Heart right ventricle (tissue), 16 donors: ENCODE measurements at regions of chr12 and their contacts with region 1.

Region 1: GRCh38 chr12:104108755-104109445 is 29.1 kb downstream of the NFYB start:
- DNase-seq: peak; percentile 69 to 75
- ATAC-seq: peak; percentile 43 to 86 (median 74)
- H3K4me3 ChIP-seq: no peak overlapping the region
- H3K27ac ChIP-seq: no peak overlapping the region
- H3K4me1 ChIP-seq: peaks cover 0 to 26% (median 12%) of the 10 kb centered on the region in 9 donors
- H3K27me3 ChIP-seq: no peaks in the 10 kb centered on the region
- CTCF ChIP-seq: peak; percentile 58 to 93 (median 87)

Region 2: DNA sequence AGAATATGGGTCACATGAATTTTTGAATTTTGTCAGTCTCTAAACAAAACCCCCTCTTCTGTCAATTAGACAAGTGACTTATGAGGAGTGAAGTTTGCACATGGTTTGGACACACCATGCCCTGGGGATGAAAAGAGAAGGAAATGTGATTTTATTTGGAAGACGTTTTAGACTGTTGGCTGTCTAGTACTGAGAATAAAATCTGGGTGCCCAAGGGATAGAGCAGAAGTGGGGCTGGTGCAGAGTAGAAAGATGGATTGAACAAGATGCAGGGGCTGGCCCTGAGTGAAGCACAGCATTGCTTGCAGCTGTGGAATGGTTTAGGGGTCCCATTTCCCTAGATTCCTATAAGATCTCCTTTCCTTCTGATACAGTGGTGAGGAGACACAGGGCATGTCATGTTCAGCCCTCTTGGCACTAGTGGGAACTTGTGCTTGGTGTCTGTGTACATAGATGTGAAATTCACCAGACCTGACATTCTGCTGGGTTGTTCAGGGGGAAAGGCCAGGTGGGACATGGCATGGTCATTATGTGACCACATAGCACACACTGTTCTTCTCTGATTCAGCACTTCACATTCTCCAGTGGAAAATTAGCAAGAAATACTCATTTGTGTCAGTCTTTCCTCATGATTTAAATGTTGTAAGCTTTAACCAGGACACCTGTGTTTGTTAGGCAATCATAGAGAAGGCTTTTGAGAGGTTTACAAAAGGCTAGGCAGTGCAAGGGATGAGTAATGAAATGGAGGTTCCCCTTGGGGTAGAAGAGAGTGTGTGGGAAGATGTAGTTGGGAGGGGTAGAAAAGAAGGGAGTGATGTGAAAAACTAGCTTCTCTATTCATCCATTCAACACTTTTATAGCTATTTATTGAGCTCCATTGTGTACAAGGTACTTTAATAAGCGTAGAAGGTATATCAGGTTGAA is 1426.3 kb before region 1 on chr12:
- intact Hi-C with region 1: no loop called
- DNase-seq: no peak
- ATAC-seq: peak in 5 of 8 donors; percentile 29 to 62 (median 50)
- H3K4me3 ChIP-seq: no peak overlapping the region
- H3K27ac ChIP-seq: no peak overlapping the region
- H3K4me1 ChIP-seq: peaks cover 0 to 7% (median 0%) of the 10 kb centered on the region in 9 donors
- H3K27me3 ChIP-seq: no peaks in the 10 kb centered on the region
- CTCF ChIP-seq: no peak

Region 3: DNA sequence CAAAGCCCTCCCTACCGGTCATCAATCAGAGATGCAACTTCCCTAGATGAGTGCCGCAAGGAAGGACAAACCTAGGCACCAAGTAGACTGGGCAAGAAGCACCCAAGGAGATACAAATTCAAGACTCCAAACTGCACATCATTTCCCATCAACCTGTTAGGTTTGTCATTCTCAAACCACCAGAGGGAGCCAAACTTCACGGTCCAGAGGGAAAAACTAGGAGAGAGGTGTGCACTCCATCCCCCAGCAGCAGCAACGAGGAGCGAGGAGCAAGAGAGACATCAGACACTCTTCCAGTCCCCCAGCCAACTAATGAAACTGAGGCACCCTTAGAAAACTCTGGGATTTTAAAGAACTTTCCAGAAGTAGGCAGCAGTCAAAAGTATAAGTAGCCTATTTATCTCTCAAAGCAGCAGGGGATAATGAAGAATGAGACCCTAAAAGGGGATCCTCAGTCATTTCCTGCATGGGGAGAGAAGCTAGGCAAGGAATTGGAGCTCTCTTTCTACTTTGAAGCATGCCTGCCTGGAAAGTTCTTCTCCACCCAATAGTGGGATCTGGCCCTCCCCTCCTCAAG is 230.9 kb before region 1 on chr12:
- intact Hi-C with region 1: loop called in 8 of 10 experiments (anchors 1 to 10 kb)
- DNase-seq: peak in 1 of 2 donors; percentile 57
- ATAC-seq: peak in 7 of 8 donors; percentile 73 to 86 (median 75)
- H3K4me3 ChIP-seq: no peak overlapping the region
- H3K27ac ChIP-seq: no peak overlapping the region
- H3K4me1 ChIP-seq: no peaks in the 10 kb centered on the region
- H3K27me3 ChIP-seq: no peaks in the 10 kb centered on the region
- CTCF ChIP-seq: peak; percentile 51 to 76 (median 74)

Region 4: DNA sequence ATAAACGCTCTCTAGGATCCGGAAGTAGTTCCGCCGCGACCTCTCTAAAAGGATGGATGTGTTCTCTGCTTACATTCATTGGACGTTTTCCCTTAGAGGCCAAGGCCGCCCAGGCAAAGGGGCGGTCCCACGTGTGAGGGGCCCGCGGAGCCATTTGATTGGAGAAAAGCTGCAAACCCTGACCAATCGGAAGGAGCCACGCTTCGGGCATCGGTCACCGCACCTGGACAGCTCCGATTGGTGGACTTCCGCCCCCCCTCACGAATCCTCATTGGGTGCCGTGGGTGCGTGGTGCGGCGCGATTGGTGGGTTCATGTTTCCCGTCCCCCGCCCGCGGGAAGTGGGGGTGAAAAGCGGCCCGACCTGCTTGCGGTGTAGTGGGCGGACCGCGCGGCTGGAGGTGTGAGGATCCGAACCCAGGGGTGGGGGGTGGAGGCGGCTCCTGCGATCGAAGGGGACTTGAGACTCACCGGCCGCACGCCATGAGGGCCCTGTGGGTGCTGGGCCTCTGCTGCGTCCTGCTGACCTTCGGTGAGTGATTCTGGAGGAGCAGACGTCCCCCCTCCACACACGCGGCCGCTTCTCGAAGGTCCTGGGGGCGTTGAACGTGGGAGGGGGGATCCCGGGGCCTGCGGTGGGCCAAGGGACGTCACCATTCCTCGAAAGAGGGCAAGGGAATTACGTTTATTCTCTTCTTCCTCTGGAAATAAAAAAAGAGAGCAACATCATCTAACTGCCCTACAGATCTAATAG is 178.7 kb before region 1 on chr12 and contains the start of gene HSP90B1:
- intact Hi-C with region 1: loop called in 1 of 10 experiments (anchors 5 kb)
- DNase-seq: peak; percentile 98 to 100
- ATAC-seq: peak; percentile 91 to 95 (median 94)
- H3K4me3 ChIP-seq: peak within 1 kb of the TSS; percentile 61 to 95 (median 78)
- H3K27ac ChIP-seq: peak within 1 kb of the TSS; percentile 88 to 98 (median 94)
- H3K4me1 ChIP-seq: peaks cover 5 to 61% (median 50%) of the 10 kb centered on the region in 9 donors
- H3K27me3 ChIP-seq: no peaks in the 10 kb centered on the region
- CTCF ChIP-seq: no peak
- total RNA-seq, gene HSP90B1: 235 to 487 (median 297) TPM

Region 5: GRCh38 chr12:103956516-103957027 is 152.3 kb before region 1 on chr12:
- intact Hi-C with region 1: loop called in 2 of 10 experiments (anchors 10 kb)
- DNase-seq: no peak
- ATAC-seq: peak; percentile 35 to 79 (median 55)
- H3K4me3 ChIP-seq: peak overlapping the region; percentile 68 to 97 (median 88)
- H3K27ac ChIP-seq: peak overlapping the region; percentile 86 to 97 (median 95)
- H3K4me1 ChIP-seq: peaks cover 3 to 36% (median 21%) of the 10 kb centered on the region in 9 donors
- H3K27me3 ChIP-seq: no peaks in the 10 kb centered on the region
- CTCF ChIP-seq: no peak

Region 6: GRCh38 chr12:103978384-103978982 is 130.4 kb before region 1 on chr12:
- intact Hi-C with region 1: loop called in 1 of 10 experiments (anchors 10 kb)
- DNase-seq: no peak
- ATAC-seq: no peak
- H3K4me3 ChIP-seq: no peak overlapping the region
- H3K27ac ChIP-seq: no peak overlapping the region
- H3K4me1 ChIP-seq: peaks cover 0 to 22% (median 9%) of the 10 kb centered on the region in 9 donors
- H3K27me3 ChIP-seq: no peaks in the 10 kb centered on the region
- CTCF ChIP-seq: no peak

Region 7: DNA sequence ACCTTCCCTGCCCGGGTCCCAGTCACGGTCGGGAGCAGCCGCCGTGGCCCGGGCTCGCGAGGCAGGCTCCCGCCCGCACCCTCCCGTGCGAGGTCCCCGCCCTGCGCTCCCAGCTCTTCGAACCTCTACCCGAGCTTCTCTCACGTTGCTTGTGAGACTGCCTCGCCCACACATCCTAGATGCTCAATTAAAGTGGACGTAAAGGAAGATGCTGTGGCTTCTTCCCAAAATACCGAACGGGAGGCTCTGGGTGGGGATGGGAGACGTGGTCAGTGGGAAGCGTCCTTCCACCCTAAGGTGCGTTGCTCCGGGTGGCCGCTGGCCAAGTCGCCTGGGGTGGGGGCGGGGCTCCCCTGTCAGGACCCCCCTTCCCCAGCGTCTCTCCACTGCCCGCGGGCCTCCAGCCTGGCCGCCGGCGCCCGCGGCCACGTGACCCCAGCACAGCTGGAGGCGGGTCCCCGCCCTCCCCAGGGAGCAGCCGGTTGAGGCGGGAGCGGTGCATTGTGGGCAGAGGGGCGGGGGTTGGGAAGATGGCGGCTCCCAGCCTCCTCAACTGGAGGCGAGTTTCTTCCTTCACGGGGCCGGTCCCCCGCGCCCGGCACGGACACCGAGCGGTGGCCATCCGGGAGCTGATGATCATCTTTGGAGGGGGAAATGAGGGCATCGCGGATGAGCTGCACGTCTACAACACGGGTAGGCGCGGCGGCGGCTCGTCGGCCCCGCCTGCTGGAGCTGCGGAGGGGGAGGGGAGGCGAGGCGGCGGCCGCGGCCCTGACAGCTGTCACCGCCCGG is 44.7 kb before region 1 on chr12 and contains the start of gene HCFC2:
- intact Hi-C with region 1: loop called in 5 of 10 experiments (anchors 5 to 10 kb)
- DNase-seq: peak; percentile 94
- ATAC-seq: peak; percentile 99
- H3K4me3 ChIP-seq: peak within 1 kb of the TSS; percentile 67 to 98 (median 93)
- H3K27ac ChIP-seq: peak within 1 kb of the TSS; percentile 75 to 97 (median 94)
- H3K4me1 ChIP-seq: peaks cover 0 to 41% (median 29%) of the 10 kb centered on the region in 9 donors
- H3K27me3 ChIP-seq: no peaks in the 10 kb centered on the region
- CTCF ChIP-seq: peak in 1 of 9 donors; percentile 15
- total RNA-seq, gene HCFC2: 8.6 to 13.6 (median 11.3) TPM

Region 8: DNA sequence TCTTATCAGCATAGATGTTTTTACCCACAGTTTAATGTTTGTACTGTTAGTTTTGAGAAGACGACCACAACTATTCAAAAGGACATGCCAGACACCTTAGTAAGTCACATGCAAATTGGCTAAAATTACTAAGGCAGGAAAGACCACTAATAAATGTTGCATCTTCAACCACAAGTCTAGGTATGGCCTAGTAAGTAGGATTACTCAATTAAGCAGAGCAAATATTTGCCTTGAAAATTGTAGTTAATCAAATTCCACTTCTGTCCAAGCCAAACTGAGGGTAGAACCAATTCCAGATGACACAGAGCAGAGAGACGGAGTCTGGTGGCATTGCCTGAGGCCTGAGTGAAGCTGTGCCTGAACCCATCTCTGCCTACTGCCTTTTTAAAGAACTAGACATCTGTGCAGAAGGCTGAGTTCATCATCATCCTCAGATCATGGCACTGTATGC is 318.1 kb after region 1 on chr12:
- intact Hi-C with region 1: no loop called
- DNase-seq: no peak
- ATAC-seq: no peak
- H3K4me3 ChIP-seq: no peak overlapping the region
- H3K27ac ChIP-seq: no peak overlapping the region
- H3K4me1 ChIP-seq: no peaks in the 10 kb centered on the region
- H3K27me3 ChIP-seq: no peaks in the 10 kb centered on the region
- CTCF ChIP-seq: no peak

Region 9: DNA sequence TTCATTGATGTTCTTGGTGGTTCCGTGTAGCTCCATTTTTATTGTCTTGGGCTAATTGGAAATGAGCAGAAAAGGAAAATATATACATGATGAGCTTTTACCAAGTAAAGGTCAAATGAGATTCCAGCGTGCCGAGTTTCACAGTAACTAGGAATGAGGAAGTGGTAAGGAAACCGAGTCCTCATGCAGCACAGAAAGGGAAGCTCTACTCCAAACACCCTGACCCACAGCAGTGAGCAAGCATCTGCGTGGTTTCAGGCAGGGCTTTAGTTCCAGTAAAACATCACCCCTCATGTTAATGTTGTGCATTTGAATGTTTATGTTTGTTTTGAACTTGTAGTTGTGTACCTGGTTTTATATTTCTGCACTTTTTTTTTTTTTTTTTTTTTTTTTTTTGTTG is 641.2 kb after region 1 on chr12:
- intact Hi-C with region 1: no loop called
- DNase-seq: peak in 1 of 2 donors; percentile 31
- ATAC-seq: peak in 6 of 8 donors; percentile 46 to 72 (median 56)
- H3K4me3 ChIP-seq: no peak overlapping the region
- H3K27ac ChIP-seq: peak overlapping the region in 1 of 10 donors; percentile 75
- H3K4me1 ChIP-seq: peaks cover 0 to 64% (median 18%) of the 10 kb centered on the region in 9 donors
- H3K27me3 ChIP-seq: no peaks in the 10 kb centered on the region
- CTCF ChIP-seq: no peak